Heart left ventricle (tissue), 16 donors: ENCODE measurements at regions of chrX and their contacts with region 1.

Region 1: DNA sequence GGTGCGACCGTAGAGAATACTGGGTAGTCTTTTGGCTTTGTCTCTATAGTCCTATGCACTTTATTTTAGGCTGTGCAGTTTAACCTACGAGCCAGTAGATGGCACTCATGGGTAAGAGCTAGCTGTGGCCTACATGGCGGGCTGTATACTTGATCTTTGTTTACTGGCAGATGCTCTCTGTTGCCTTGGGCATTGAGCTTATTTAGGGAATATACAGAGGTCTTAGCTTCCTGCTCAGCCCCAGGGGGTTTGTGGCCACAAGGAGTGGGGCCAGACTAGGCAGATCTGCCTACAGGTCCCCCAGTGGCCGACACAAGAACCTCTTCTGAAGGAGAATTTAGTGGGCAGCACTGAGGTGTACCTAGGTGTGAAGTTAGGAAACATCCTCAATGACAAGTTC is 227.6 kb upstream of the HDX start:
- DNase-seq: peak in 1 of 5 donors; percentile 14
- ATAC-seq: peak in 3 of 4 donors; percentile 65 to 82 (median 76)
- H3K4me3 ChIP-seq: no peak overlapping the region
- H3K27ac ChIP-seq: no peak overlapping the region
- H3K4me1 ChIP-seq: no peaks in the 10 kb centered on the region
- H3K27me3 ChIP-seq: peaks cover 0 to 6% (median 0%) of the 10 kb centered on the region in 9 donors
- CTCF ChIP-seq: peak; percentile 51 to 77 (median 68)
- POLR2A ChIP-seq: no peak

Region 2: GRCh38 chrX:84907324-84907968 is 177.6 kb after region 1 on chrX:
- intact Hi-C with region 1: loop called (anchors 1 to 5 kb)
- DNase-seq: no peak
- ATAC-seq: no peak
- H3K4me3 ChIP-seq: no peak overlapping the region
- H3K27ac ChIP-seq: no peak overlapping the region
- H3K4me1 ChIP-seq: no peaks in the 10 kb centered on the region
- H3K27me3 ChIP-seq: peaks cover 0 to 3% (median 0%) of the 10 kb centered on the region in 9 donors
- CTCF ChIP-seq: peak in 10 of 12 donors; percentile 11 to 46 (median 28)
- POLR2A ChIP-seq: no peak

Region 3: DNA sequence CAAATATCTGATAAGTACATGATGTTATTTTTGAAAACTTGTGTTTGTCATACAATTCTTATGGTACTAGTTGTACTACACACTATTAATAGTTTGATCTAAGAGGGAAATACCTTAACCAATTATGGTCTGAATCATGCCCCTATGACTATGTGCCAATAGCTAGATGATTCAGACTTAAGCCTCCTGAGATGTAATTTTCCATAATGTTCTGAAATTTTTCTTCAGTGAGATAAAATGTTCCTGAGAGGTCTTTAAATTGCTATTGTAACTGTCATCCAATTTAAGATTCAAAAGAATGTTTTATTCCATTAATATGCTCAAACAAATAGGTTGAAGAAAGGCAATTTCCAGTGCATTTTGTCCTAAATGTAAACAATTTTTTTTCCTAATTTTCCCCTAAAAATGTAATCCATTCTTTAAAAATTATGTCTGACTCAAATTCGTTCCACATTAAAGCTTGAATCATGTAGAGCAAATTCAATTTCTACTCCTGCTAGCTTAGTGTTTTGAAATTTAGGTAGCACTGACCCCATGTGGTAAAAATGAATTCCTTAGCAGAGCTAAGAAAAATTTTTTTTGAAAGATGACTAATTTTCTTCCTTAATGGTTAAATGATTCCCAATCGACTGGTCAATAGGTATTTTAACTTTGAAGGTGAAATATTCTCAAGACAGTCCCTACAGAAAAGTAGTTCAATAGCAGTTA is 323.0 kb after region 1 on chrX:
- intact Hi-C with region 1: loop called in 8 of 10 experiments (anchors 5 to 10 kb)
- DNase-seq: no peak
- ATAC-seq: no peak
- H3K4me3 ChIP-seq: no peak overlapping the region
- H3K27ac ChIP-seq: no peak overlapping the region
- H3K4me1 ChIP-seq: peaks cover 0 to 5% (median 0%) of the 10 kb centered on the region in 12 donors
- H3K27me3 ChIP-seq: no peaks in the 10 kb centered on the region
- CTCF ChIP-seq: peak in 10 of 12 donors; percentile 12 to 47 (median 34)
- POLR2A ChIP-seq: no peak